Ovary (tissue), 10 donors: ENCODE measurements at regions of chr12 and their contacts with region 1.

Region 1: DNA sequence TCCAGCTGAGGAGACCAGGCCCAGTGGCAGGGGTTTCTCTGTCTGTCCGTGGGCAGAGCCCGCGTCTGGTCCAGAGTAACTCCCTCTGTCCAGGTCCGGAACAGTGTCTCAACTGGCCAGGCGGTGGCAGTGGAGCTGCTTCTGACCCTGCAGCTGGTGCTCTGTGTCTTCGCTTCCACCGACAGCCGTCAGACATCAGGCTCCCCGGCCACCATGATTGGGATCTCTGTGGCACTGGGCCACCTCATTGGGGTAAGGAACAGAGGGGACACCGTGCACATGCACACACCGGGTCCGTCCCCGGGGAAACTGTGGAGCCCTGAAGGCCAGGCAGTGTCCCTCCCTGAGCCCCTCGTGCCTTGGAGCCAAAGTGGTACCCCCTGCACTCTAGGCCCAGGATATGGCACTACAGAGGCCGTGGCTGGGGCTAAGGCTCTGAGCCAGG is 1.5 kb downstream of the AQP6 start:
- DNase-seq: peak; percentile 40 to 68 (median 58)
- H3K4me3 ChIP-seq: no peak overlapping the region
- H3K27ac ChIP-seq: no peak overlapping the region
- H3K4me1 ChIP-seq: peaks cover 8% of the 10 kb centered on the region
- H3K27me3 ChIP-seq: no peaks in the 10 kb centered on the region
- CTCF ChIP-seq: peak in 1 of 3 donors; percentile 29
- EP300 ChIP-seq: no peak
- POLR2A ChIP-seq: no peak

Region 2: GRCh38 chr12:49789992-49790391 is 184.3 kb before region 1 on chr12:
- intact Hi-C with region 1: no loop called
- DNase-seq: peak in 1 of 5 donors; percentile 18
- H3K4me3 ChIP-seq: no peak overlapping the region
- H3K27ac ChIP-seq: no peak overlapping the region
- H3K4me1 ChIP-seq: no peaks in the 10 kb centered on the region
- H3K27me3 ChIP-seq: no peaks in the 10 kb centered on the region
- CTCF ChIP-seq: no peak
- EP300 ChIP-seq: no peak
- POLR2A ChIP-seq: no peak

Region 3: GRCh38 chr12:50050410-50051098 is 76.3 kb after region 1 on chr12:
- intact Hi-C with region 1: loop called in 3 of 4 experiments (anchors 5 to 10 kb)
- DNase-seq: peak; percentile 75 to 87 (median 79)
- H3K4me3 ChIP-seq: peak overlapping the region; percentile 24
- H3K27ac ChIP-seq: peak overlapping the region in 1 of 2 donors; percentile 59
- H3K4me1 ChIP-seq: peaks cover 2% of the 10 kb centered on the region
- H3K27me3 ChIP-seq: no peaks in the 10 kb centered on the region
- CTCF ChIP-seq: no peak
- EP300 ChIP-seq: no peak
- POLR2A ChIP-seq: no peak

Region 4: DNA sequence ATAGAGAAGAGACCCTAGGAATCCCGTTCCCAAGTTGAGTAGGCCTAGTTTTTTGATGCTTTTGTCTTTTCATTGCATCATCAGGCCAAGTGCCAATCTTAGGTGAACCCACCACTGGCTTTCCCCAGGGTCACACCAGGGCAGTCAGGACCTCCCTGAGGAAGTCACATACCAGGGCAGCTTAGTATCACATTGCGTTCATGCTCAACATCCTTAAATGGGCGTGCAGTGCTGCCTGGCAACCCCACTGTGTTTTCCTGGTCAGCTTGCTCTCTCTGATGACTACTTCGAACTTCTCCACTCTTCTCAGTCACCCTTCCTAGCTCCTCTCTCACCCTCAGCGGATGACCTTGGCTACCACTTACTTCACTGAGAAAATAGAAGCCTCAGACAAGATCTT is 92.2 kb after region 1 on chr12:
- intact Hi-C with region 1: loop called in 3 of 4 experiments (anchors 5 kb)
- DNase-seq: no peak
- H3K4me3 ChIP-seq: no peak overlapping the region
- H3K27ac ChIP-seq: no peak overlapping the region
- H3K4me1 ChIP-seq: peaks cover 1% of the 10 kb centered on the region
- H3K27me3 ChIP-seq: no peaks in the 10 kb centered on the region
- CTCF ChIP-seq: no peak
- EP300 ChIP-seq: no peak
- POLR2A ChIP-seq: no peak

Region 5: DNA sequence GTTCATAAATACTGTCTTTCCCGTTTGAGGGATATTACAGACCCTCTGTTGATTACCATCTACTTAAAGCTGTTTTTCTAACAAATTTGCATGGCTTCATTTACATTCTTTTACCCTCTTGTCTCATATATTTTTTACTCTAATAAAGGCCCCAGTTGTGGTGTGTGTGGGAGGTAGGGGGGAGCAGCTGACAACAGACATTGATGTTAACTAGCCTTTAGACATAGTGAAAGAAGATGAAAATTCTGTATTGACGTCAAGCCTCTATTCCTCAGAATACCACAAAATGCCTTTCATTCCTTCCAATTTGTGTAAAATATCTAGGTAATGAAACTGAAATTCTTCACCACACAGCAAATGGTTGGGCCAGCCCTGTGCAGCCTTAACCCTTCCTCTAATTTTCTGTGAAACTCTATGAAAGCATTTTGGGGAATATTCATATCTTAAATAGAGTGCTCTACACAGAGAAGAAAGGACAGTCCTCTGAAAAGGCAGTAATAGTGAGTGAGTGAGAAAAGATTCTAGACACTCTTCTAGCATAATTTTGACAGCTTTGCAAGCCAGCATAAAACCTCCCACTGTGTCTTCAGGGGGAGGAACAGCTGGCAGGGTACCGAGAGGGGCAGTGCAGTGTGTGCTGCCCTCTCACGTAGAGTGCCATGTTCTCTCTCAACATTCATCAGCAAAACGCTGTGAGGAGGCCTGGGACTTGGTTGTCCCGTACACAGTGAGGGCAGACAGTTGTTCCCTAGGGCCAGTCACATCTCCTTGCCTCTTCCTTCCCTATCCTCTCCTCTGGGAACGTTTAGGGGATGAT is 213.0 kb after region 1 on chr12:
- intact Hi-C with region 1: no loop called
- DNase-seq: no peak
- H3K4me3 ChIP-seq: no peak overlapping the region
- H3K27ac ChIP-seq: no peak overlapping the region
- H3K4me1 ChIP-seq: peaks cover 4% of the 10 kb centered on the region
- H3K27me3 ChIP-seq: no peaks in the 10 kb centered on the region
- CTCF ChIP-seq: no peak
- EP300 ChIP-seq: no peak
- POLR2A ChIP-seq: no peak